ENCODE measurements at regions of chr14 and their contacts with region 1.

Region 1: DNA sequence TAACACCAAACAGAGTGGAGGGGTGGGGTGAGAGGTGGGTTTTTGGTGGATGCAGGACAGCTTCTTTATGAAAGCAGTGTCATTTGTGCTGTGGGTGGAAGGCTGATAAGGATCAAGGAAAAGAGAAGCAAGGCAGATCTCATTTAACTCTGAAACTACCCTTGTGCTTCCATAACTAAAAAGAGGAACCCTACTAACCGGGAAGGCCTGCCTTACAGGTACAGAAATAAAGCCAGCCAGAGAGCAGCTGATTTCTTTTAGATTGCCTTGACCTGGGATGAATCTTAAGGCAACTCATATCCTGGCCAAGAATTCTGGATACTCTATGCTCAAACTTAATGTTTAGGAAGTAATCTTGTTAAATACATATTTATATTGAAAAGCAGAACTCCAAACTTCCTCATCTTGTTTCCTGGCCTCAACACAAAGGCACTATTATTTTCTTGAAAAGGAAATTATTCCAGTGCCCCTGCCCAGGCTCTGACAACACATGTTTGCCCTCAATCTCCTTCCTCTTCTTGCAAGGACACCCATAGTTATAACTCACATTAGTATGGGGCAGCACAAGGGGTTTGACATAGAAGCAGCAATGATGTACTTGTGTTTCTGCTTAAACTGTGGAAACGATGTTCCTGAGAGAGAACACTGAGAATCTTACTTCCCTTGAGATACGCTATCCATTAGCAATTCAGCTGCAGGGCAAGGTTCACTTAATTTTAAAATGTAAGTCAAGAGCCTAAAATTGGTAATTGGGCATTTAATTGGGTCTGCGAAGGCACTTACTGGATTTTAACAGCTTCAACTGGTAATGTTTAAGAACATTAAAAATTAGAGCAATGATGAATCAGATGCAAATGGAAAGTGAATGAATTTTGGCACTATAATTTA is 173.7 kb downstream of the STXBP6 start:
- DNase-seq: no peak
- H3K4me3 Mint-ChIP-seq: no peak overlapping the region
- H3K27ac Mint-ChIP-seq: peak overlapping the region; percentile 16
- H3K4me1 Mint-ChIP-seq: peaks cover 58% of the 10 kb centered on the region
- H3K27me3 Mint-ChIP-seq: no peaks in the 10 kb centered on the region
- CTCF ChIP-seq: no peak

Region 2: GRCh38 chr14:24847568-24848095 is 28.6 kb before region 1 on chr14:
- CTCF ChIA-PET with region 1: no interaction called
- intact Hi-C with region 1: loop called (anchors 2 kb)
- DNase-seq: no peak
- H3K4me3 Mint-ChIP-seq: no peak overlapping the region
- H3K27ac Mint-ChIP-seq: no peak overlapping the region
- H3K4me1 Mint-ChIP-seq: peaks cover 49% of the 10 kb centered on the region
- H3K27me3 Mint-ChIP-seq: no peaks in the 10 kb centered on the region
- CTCF ChIP-seq: no peak

Region 3: GRCh38 chr14:25178255-25178654 is 302.0 kb after region 1 on chr14:
- CTCF ChIA-PET with region 1: no interaction called
- intact Hi-C with region 1: no loop called
- DNase-seq: no peak
- H3K4me3 Mint-ChIP-seq: no peak overlapping the region
- H3K27ac Mint-ChIP-seq: no peak overlapping the region
- H3K4me1 Mint-ChIP-seq: no peaks in the 10 kb centered on the region
- H3K27me3 Mint-ChIP-seq: no peaks in the 10 kb centered on the region
- CTCF ChIP-seq: no peak